ENCODE measurements at regions of chr1 and their contacts with region 1.

Region 1: GRCh38 chr1:87999852-88000251 is 671.2 kb downstream of the LMO4 start:
- DNase-seq: no peak
- H3K4me3 ChIP-seq: no peak overlapping the region
- H3K27ac ChIP-seq: no peak overlapping the region
- H3K4me1 ChIP-seq: no peaks in the 10 kb centered on the region
- H3K27me3 ChIP-seq: no peaks in the 10 kb centered on the region
- CTCF ChIP-seq: no peak
- POLR2A ChIP-seq: no peak

Region 2: DNA sequence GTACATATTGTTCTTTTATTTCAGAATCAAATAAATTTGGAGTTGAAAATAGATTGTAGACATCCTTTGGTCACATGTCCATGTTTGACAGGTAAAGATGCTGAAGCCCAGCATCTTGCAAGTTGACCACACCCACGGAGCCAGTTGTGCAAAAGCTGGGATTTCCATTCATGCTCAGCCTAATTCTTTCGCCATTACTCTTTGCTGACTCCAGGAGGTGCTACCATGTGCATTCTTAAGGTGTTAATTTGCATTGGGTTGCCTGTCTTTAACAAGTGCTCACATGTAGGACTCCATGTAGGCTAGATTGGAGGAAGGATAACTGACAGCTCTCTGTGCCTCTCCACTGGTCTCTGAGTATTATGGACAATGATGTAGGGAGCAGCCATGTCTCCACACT is 10.5 kb before region 1 on chr1:
- intact Hi-C with region 1: loop called (anchors 1 kb)
- DNase-seq: no peak
- H3K4me3 ChIP-seq: no peak overlapping the region
- H3K27ac ChIP-seq: no peak overlapping the region
- H3K4me1 ChIP-seq: no peaks in the 10 kb centered on the region
- H3K27me3 ChIP-seq: no peaks in the 10 kb centered on the region
- CTCF ChIP-seq: no peak
- POLR2A ChIP-seq: no peak